Activated naive CD4-positive, alpha-beta T cell treated with anti-CD3 and anti-CD28 coated beads for 36 hours (primary cell): ENCODE measurements at regions of chr1 and their contacts with region 1.

Region 1: DNA sequence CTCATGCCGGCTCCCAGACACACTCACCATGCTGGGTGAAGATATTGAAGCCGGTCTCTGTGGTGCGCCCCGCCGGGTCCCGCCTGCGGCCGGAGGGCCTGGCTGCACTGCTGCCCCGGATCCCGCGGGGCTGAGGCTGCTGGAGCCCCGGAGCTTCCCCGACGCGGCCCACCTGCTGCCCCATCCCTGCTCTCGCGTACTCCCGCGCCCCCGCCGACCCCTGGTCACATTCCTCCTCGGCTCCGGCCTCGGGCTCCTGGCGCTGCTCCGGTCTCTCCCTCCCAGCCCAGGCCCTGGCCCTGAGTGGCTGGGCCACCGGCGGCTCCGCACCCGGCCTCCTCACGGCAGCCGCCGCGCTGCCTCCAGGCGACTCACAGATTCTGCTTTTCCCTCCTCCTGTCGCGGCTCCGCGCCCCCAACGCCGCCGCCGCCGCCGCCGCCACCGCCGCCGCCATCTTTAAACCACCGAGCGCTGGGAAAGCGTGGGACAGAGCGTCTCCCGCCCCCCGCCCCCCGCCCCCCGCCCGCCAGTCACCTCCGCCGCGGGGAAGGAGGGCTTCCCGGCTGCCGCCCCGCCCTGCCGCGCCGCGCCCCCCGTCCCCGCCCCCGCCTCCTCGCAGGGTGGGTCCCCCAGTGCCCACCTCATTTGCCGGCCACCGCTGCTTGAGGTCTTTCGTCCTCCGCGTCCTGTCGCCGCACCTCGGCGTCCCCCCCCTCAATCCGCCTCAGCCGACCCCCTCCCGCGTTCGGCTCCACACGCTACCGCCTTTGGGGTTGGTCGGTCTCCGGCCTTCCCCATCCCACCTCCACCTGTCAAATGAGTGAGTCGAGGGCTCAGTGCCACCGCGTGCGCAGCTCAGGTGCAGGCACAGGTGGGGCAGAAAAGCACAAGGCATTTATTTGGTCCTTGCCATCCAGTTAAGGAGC is at the start of gene ABL2:
- DNase-seq: peak; percentile 49
- H3K4me3 Mint-ChIP-seq: peak within 1 kb of the TSS; percentile 90
- H3K27ac Mint-ChIP-seq: peak within 1 kb of the TSS; percentile 85
- H3K4me1 Mint-ChIP-seq: peaks cover 31% of the 10 kb centered on the region
- H3K27me3 Mint-ChIP-seq: no peaks in the 10 kb centered on the region
- total RNA-seq, gene ABL2: 8.1 TPM

Region 2: GRCh38 chr1:179121159-179121938 is 108.1 kb before region 1 on chr1:
- CTCF ChIA-PET with region 1: interaction called, 5 read pairs
- intact Hi-C with region 1: loop called (anchors 2 kb)
- DNase-seq: peak; percentile 64
- H3K4me3 Mint-ChIP-seq: no peak overlapping the region
- H3K27ac Mint-ChIP-seq: no peak overlapping the region
- H3K4me1 Mint-ChIP-seq: peaks cover 3% of the 10 kb centered on the region
- H3K27me3 Mint-ChIP-seq: no peaks in the 10 kb centered on the region

Region 3: GRCh38 chr1:179129702-179130473 is 99.6 kb before region 1 on chr1:
- CTCF ChIA-PET with region 1: interaction called, 5 read pairs
- intact Hi-C with region 1: loop called (anchors 1 kb)
- DNase-seq: peak; percentile 24
- H3K4me3 Mint-ChIP-seq: peak overlapping the region; percentile 60
- H3K27ac Mint-ChIP-seq: peak overlapping the region; percentile 87
- H3K4me1 Mint-ChIP-seq: peaks cover 37% of the 10 kb centered on the region
- H3K27me3 Mint-ChIP-seq: no peaks in the 10 kb centered on the region

Region 4: GRCh38 chr1:179151908-179152682 is 77.4 kb before region 1 on chr1:
- CTCF ChIA-PET with region 1: no interaction called
- intact Hi-C with region 1: loop called (anchors 2 kb)
- DNase-seq: no peak
- H3K4me3 Mint-ChIP-seq: no peak overlapping the region
- H3K27ac Mint-ChIP-seq: no peak overlapping the region
- H3K4me1 Mint-ChIP-seq: peaks cover 20% of the 10 kb centered on the region
- H3K27me3 Mint-ChIP-seq: no peaks in the 10 kb centered on the region

Region 5: GRCh38 chr1:179205284-179205683 is 24.2 kb before region 1 on chr1:
- CTCF ChIA-PET with region 1: no interaction called
- intact Hi-C with region 1: loop called (anchors 2 kb)
- DNase-seq: no peak
- H3K4me3 Mint-ChIP-seq: no peak overlapping the region
- H3K27ac Mint-ChIP-seq: peak overlapping the region; percentile 9
- H3K4me1 Mint-ChIP-seq: peaks cover 32% of the 10 kb centered on the region
- H3K27me3 Mint-ChIP-seq: no peaks in the 10 kb centered on the region

Region 6: DNA sequence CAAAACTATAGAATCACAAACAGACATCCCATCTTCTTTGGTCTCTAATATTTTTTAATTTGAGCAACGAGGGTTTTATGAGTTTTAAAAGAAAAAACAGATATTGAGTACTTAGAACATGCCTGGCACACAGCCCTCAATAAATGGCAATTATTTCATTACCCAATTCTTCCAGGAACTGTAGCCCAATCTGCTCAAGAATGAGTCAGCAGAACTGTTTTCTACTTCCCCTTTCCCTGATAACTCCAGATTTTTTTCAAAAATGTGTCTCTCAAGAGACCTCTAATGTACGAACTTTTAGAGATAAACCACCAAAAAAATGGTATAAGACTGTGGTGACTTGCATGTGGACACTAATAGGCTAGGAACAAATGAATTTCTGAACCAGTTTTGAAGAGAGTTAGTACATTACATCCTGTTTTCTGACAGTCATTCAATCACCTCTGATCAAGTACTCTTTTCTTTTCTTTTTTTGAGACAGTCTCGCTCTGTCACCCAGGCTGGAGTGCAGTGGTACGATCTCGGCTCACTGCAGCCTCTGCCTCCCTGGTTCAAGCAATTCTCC is 11.5 kb before region 1 on chr1:
- CTCF ChIA-PET with region 1: interaction called, 3 read pairs
- intact Hi-C with region 1: loop called (anchors 1 kb)
- DNase-seq: no peak
- H3K4me3 Mint-ChIP-seq: no peak overlapping the region
- H3K27ac Mint-ChIP-seq: no peak overlapping the region
- H3K4me1 Mint-ChIP-seq: peaks cover 20% of the 10 kb centered on the region
- H3K27me3 Mint-ChIP-seq: no peaks in the 10 kb centered on the region